HCT116 (cell line): ENCODE measurements at regions of chr15 and their contacts with region 1.

Region 1: DNA sequence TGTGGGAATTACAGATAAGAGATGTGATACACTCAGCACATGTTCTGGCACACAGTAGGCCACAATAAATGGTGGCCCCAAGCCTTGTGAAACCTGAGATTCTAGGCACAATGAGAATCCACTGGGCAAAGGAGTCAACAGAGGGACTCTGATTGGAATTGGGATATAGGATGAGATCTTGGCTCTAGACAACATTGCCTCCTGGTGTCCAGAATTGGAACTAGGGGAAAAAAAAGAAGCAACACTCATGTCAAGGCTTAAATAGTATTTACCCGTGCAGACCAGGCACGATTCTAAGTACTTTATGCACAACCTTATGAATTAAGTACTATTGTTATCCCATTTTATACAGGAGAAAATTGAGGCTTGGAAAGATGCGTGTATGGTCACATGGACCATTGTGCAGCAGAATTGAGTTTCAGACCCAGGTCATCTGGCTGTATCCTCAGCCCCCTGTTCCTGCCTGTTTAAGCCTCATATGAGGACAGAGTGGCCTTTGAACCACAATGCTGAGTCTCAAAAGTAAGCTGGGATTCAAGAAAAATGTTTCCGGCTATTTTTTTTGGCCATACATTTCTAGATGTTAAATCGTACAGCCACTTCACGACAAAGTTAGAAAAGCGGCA is 124.8 kb downstream of the SV2B start:
- DNase-seq: peak; percentile 47
- ATAC-seq: peak; percentile 90
- H3K4me3 ChIP-seq: no peak overlapping the region
- H3K27ac ChIP-seq: no peak overlapping the region
- H3K4me1 ChIP-seq: no peaks in the 10 kb centered on the region
- H3K27me3 ChIP-seq: peaks cover 35% of the 10 kb centered on the region
- CTCF ChIP-seq: peak; percentile 70 to 80 (median 72); a peak in 5 of 6 replicates
- POLR2A ChIP-seq: no peak
- RAD21 ChIP-seq: peak; percentile 77

Region 2: DNA sequence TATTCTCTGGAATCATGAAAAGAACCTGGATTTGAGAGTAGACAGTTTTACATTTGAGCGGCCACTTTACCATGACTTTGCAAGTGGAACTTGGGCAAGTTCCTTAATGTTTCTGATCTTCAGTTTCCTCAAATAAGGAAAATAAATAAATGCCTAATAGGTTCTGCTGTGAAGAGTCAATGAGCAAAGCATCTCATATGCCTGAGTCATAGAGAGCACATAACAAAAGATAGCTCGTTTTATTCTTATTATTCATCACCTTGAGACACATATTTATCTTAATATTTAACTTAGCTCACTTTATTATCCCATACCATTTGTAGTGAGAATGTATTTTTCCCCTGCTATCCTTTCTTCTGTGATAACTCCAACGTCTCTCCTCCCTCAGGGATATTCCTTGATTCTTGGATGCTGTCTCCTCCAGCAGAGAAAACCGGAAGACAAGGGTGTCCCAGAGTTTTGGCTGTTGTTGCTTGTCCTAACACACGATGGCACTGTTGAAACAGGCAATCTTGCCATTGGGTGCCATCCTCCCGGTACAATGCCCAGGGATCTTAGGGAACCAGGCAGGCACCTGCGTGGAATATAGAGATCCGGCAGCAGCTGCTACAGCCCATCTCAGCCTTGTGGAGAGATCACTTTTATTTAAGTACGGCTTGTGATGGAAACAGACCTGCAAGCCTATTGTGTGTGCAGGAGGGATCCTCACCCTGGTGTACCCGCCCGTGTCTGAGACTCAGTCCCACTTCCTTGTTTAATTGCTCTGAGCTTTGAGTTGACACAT is 169.1 kb before region 1 on chr15:
- CTCF ChIA-PET with region 1: interaction called, 33 read pairs
- POLR2A ChIA-PET with region 1: no interaction called
- RAD21 ChIA-PET with region 1: interaction called in 1 of 2 experiments, 5 read pairs
- intact Hi-C with region 1: loop called (anchors 1 kb)
- DNase-seq: peak; percentile 75
- ATAC-seq: peak; percentile 98
- H3K4me3 ChIP-seq: 0 out of 4 replicates have a peak overlapping the region, but pooled peaks of 1 of the 2 experiments have one; percentile 18
- H3K27ac ChIP-seq: no peak overlapping the region
- H3K4me1 ChIP-seq: peaks cover 0 to 6% of the 10 kb centered on the region in 2 experiments; a peak in 1 of 4 replicates
- H3K27me3 ChIP-seq: peaks cover 67% of the 10 kb centered on the region
- CTCF ChIP-seq: peak; percentile 83 to 89 (median 88)
- POLR2A ChIP-seq: no peak
- RAD21 ChIP-seq: peak; percentile 94